HAP-1 (cell line): ENCODE measurements at regions of chr20 and their contacts with region 1.

Region 1: DNA sequence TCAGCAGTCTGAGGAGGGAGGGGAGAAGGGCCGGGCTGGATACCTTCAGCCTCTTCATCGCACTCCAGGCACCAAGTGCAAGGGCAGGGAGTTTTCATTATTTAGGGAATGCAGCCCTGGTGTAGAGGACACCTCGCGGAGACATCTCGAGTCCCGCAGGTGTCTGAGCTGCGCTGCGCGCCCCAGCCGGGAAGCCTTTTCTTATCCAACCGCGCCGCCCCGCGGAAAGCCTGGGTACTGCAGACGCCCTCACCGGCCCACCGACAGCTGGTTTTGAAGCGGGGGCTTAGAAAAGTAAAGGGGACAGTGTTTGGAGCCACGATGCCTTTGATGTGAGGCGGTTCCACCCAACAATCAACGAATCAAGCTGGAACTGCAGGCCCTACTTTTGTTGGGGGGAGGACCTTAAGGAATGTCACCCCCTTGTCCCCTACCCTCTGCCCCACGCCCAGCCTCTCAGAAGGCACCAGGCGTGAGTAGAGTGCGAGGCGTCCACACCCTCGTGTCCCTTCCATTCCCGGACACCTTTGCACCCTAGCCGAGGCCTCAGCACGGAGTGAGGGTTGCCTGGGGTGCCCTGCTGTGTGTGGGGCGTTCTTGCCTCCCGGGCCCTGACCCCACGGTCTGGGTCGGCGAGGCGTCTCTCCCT is 8.6 kb downstream of the NKX2-2 start:
- DNase-seq: peak in 1 of 2 experiments; percentile 93
- H3K4me3 ChIP-seq: peak overlapping the region; percentile 62
- H3K4me1 ChIP-seq: peaks cover 9% of the 10 kb centered on the region
- H3K27me3 ChIP-seq: no peaks in the 10 kb centered on the region

Region 2: DNA sequence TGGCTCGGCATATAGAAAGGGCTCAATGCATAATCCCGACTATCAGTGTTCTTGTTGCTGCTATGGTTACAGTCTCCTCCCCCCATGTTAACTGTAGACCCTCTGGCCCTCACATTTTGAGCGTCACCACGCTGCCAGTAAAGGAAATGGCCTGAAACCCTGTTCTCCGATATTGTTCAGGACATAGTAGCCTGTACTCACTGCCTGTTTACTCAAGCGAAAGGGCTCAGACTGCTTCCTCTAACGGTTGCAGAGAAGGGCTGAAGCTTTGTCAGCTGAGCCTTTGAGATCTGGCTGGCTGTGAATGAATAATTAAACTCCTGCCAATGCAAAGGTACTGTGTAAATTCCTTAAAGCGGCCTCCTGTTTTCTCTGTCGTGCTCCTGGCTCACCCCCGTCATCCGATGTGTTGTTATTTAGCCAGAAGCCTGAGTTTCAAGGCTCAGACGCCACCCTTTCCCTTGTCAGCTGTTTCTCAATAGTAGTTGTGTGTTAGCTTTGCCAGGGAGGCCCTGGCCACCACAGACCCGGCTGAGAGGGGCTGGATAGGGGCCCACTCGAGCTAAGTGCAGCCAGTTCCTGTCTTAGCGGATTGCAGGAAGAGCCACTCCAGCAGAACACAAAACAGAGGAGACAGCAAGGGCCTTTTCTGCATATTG is 761.6 kb before region 1 on chr20:
- in situ Hi-C with region 1: no loop called
- DNase-seq: peak in 1 of 2 experiments; percentile 24
- H3K4me3 ChIP-seq: no peak overlapping the region
- H3K4me1 ChIP-seq: no peaks in the 10 kb centered on the region; the same call in 1 of the 2 replicates
- H3K27me3 ChIP-seq: no peaks in the 10 kb centered on the region

Region 3: GRCh38 chr20:20837574-20838021 is 667.7 kb before region 1 on chr20:
- in situ Hi-C with region 1: loop called (anchors 5 kb)
- DNase-seq: peak; percentile 61 to 81
- H3K4me3 ChIP-seq: no peak overlapping the region
- H3K4me1 ChIP-seq: no peaks in the 10 kb centered on the region
- H3K27me3 ChIP-seq: peaks cover 4% of the 10 kb centered on the region

Region 4: GRCh38 chr20:21235484-21236445 is 269.5 kb before region 1 on chr20:
- in situ Hi-C with region 1: loop called (anchors 5 kb)
- DNase-seq: peak; percentile 65 to 83
- H3K4me3 ChIP-seq: no peak overlapping the region
- H3K4me1 ChIP-seq: peaks cover 10% of the 10 kb centered on the region
- H3K27me3 ChIP-seq: no peaks in the 10 kb centered on the region

Region 5: DNA sequence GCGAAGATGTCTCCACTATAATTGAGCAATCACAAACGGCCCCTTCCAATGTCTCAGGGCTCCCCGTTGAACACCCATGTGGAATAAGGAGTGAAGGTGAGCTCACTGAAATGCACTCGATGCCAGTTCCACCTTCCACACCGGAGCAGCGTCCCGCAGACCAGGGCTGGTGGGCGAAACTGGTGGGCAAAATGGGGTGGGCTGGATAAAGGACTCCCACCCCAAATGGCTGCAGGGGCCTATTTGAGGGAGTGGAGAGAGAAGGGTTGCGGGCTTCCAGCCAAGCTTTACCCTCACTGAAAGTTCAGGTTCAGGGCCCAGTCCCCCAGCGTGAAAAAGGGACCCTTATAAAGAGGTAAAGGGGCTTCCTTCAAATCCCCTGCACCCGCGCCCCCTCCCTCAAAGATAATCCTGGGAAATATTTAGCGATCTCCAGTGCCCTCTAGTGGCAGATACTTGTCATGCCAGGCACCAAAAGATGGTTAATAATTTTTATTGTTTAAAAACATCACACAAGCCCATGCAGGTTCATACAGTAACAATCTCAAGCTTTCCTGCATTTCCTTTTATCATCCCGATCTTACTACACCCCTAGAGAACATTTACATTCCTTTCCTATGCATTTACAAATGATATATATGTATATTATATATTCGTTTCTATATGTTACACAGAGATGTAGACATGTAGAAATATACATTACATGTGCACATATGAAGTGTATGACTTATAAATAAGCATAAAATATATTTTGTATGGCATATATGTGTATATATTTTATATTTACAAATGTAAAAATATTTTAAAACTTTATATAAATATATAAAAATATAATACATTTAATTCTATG is 66.8 kb after region 1 on chr20:
- in situ Hi-C with region 1: loop called (anchors 5 kb)
- DNase-seq: peak in 1 of 2 experiments; percentile 45
- H3K4me3 ChIP-seq: no peak overlapping the region
- H3K4me1 ChIP-seq: no peaks in the 10 kb centered on the region
- H3K27me3 ChIP-seq: peaks cover 7% of the 10 kb centered on the region; the same call in 1 of the 2 replicates

Region 6: GRCh38 chr20:21755966-21756365 is 250.7 kb after region 1 on chr20:
- in situ Hi-C with region 1: no loop called
- DNase-seq: no peak
- H3K4me3 ChIP-seq: no peak overlapping the region
- H3K4me1 ChIP-seq: no peaks in the 10 kb centered on the region
- H3K27me3 ChIP-seq: no peaks in the 10 kb centered on the region

Region 7: GRCh38 chr20:23350196-23350903 is 1845.1 kb after region 1 on chr20 and contains the start of gene NXT1:
- in situ Hi-C with region 1: loop called (anchors 25 kb)
- DNase-seq: peak; percentile 93 to 95
- H3K4me3 ChIP-seq: peak within 1 kb of the TSS; percentile 81
- H3K4me1 ChIP-seq: peaks cover 7% of the 10 kb centered on the region; the same call in 1 of the 2 replicates
- H3K27me3 ChIP-seq: no peaks in the 10 kb centered on the region